ENCODE measurements at regions of chr7 and their contacts with region 1.

Region 1: GRCh38 chr7:99143853-99144672 is at the start of gene SMURF1:
- DNase-seq: peak; percentile 55 to 80
- H3K4me3 ChIP-seq: peak within 1 kb of the TSS; percentile 83
- H3K4me3 Mint-ChIP-seq: peak within 1 kb of the TSS; percentile 83
- H3K27ac Mint-ChIP-seq: peak within 1 kb of the TSS; percentile 78
- H3K4me1 ChIP-seq: peaks cover 7% of the 10 kb centered on the region
- H3K4me1 Mint-ChIP-seq: peaks cover 16% of the 10 kb centered on the region
- H3K27me3 ChIP-seq: no peaks in the 10 kb centered on the region
- H3K27me3 Mint-ChIP-seq: no peaks in the 10 kb centered on the region
- CTCF ChIP-seq: no peak
- total RNA-seq, gene SMURF1: 22.5 and 23.0 TPM in 2 replicates

Region 2: GRCh38 chr7:98641646-98642500 is 502.2 kb before region 1 on chr7:
- CTCF ChIA-PET with region 1: no interaction called
- POLR2A ChIA-PET with region 1: no interaction called
- intact Hi-C with region 1: no loop called
- DNase-seq: no peak
- H3K4me3 ChIP-seq: no peak overlapping the region
- H3K4me3 Mint-ChIP-seq: no peak overlapping the region
- H3K27ac Mint-ChIP-seq: no peak overlapping the region
- H3K4me1 ChIP-seq: no peaks in the 10 kb centered on the region
- H3K4me1 Mint-ChIP-seq: no peaks in the 10 kb centered on the region
- H3K27me3 ChIP-seq: no peaks in the 10 kb centered on the region
- H3K27me3 Mint-ChIP-seq: peaks cover 1% of the 10 kb centered on the region
- CTCF ChIP-seq: no peak

Region 3: GRCh38 chr7:99040104-99040958 is 103.7 kb before region 1 on chr7:
- CTCF ChIA-PET with region 1: interaction called, 4 read pairs
- POLR2A ChIA-PET with region 1: no interaction called
- intact Hi-C with region 1: loop called (anchors 5 kb)
- DNase-seq: peak; percentile 82 to 86
- H3K4me3 ChIP-seq: no peak overlapping the region
- H3K4me3 Mint-ChIP-seq: no peak overlapping the region
- H3K27ac Mint-ChIP-seq: peak overlapping the region; percentile 87
- H3K4me1 ChIP-seq: no peaks in the 10 kb centered on the region
- H3K4me1 Mint-ChIP-seq: peaks cover 13% of the 10 kb centered on the region
- H3K27me3 ChIP-seq: no peaks in the 10 kb centered on the region
- H3K27me3 Mint-ChIP-seq: no peaks in the 10 kb centered on the region
- CTCF ChIP-seq: peak; percentile 62 to 76

Region 4: DNA sequence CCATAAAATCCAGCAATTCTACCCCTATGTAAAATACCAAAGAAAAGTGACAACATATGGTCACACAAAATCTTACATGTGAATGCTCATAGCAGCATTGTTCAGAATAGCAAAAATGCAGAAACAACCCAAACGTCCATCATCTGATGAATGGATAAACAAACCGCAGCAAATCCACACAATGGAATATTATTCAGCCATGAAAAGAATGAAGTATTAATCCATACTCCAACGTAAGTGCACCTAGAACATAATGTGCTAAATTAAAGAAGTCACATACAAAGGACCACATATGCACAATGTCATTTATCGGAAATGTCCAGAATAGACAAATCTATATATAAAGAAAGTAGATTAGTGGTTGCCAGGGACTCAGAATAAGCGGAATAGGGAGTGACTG is 57.5 kb before region 1 on chr7:
- CTCF ChIA-PET with region 1: no interaction called
- POLR2A ChIA-PET with region 1: no interaction called
- intact Hi-C with region 1: no loop called
- DNase-seq: no peak
- H3K4me3 ChIP-seq: no peak overlapping the region
- H3K4me3 Mint-ChIP-seq: no peak overlapping the region
- H3K27ac Mint-ChIP-seq: no peak overlapping the region
- H3K4me1 ChIP-seq: peaks cover 5% of the 10 kb centered on the region; the same call in 1 of the 2 replicates
- H3K4me1 Mint-ChIP-seq: peaks cover 8% of the 10 kb centered on the region
- H3K27me3 ChIP-seq: no peaks in the 10 kb centered on the region
- H3K27me3 Mint-ChIP-seq: no peaks in the 10 kb centered on the region
- CTCF ChIP-seq: no peak

Region 5: GRCh38 chr7:99098824-99099498 is 45.1 kb before region 1 on chr7:
- CTCF ChIA-PET with region 1: no interaction called
- POLR2A ChIA-PET with region 1: interaction called, 5 read pairs
- intact Hi-C with region 1: loop called (anchors 5 kb)
- DNase-seq: peak; percentile 59 to 80
- H3K4me3 ChIP-seq: no peak overlapping the region
- H3K4me3 Mint-ChIP-seq: peak overlapping the region; percentile 56
- H3K27ac Mint-ChIP-seq: peak overlapping the region; percentile 79
- H3K4me1 ChIP-seq: peaks cover 27% of the 10 kb centered on the region
- H3K4me1 Mint-ChIP-seq: peaks cover 31% of the 10 kb centered on the region
- H3K27me3 ChIP-seq: no peaks in the 10 kb centered on the region
- H3K27me3 Mint-ChIP-seq: no peaks in the 10 kb centered on the region
- CTCF ChIP-seq: no peak

Region 6: GRCh38 chr7:99210264-99210970 is 66.4 kb after region 1 on chr7:
- CTCF ChIA-PET with region 1: interaction called, 10 read pairs
- POLR2A ChIA-PET with region 1: no interaction called
- intact Hi-C with region 1: loop called (anchors 2 kb)
- DNase-seq: peak; percentile 46 to 80
- H3K4me3 ChIP-seq: no peak overlapping the region
- H3K4me3 Mint-ChIP-seq: peak overlapping the region; percentile 49
- H3K27ac Mint-ChIP-seq: peak overlapping the region; percentile 98
- H3K4me1 ChIP-seq: peaks cover 39% of the 10 kb centered on the region
- H3K4me1 Mint-ChIP-seq: peaks cover 24% of the 10 kb centered on the region
- H3K27me3 ChIP-seq: no peaks in the 10 kb centered on the region
- H3K27me3 Mint-ChIP-seq: no peaks in the 10 kb centered on the region
- CTCF ChIP-seq: no peak

Measured in Caco-2 (cell line).